ENCODE measurements at regions of chr16 and their contacts with region 1.

Region 1: GRCh38 chr16:50368410-50369132 is at the start of gene BRD7:
- DNase-seq: no peak
- H3K4me3 ChIP-seq: peak within 1 kb of the TSS; percentile 70
- H3K27ac ChIP-seq: no peak within 1 kb of the TSS
- H3K27me3 ChIP-seq: peaks cover 4% of the 10 kb centered on the region
- CTCF ChIP-seq: peak; percentile 30
- polyA plus RNA-seq, gene BRD7: 49.2 and 69.2 TPM in 2 replicates

Region 2: DNA sequence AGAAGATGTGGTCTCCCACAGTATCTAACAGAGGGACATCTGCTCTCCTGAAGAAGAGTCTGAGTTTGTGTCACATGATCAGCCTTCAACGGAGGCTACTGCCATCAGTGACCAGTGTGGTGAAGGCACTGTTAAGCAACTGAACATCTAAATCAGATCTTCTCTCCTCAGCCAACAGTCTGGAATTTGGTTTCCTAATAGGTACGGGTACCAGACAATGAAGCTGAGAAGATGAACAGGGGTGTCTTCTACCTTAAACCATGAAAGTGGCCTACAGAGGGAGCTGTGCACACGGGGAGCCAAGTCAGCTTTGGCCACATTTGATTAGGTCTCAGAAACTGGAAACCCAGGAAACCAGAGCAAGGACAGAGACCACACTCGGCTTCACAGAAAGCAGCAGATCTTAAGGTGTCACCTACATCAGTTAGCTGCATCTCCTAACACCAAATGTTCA is 41.6 kb before region 1 on chr16:
- CTCF ChIA-PET with region 1: interaction called, 10 read pairs
- POLR2A ChIA-PET with region 1: no interaction called
- DNase-seq: no peak
- H3K4me3 ChIP-seq: no peak overlapping the region
- H3K27ac ChIP-seq: no peak overlapping the region
- H3K27me3 ChIP-seq: no peaks in the 10 kb centered on the region
- CTCF ChIP-seq: peak; percentile 58

Region 3: DNA sequence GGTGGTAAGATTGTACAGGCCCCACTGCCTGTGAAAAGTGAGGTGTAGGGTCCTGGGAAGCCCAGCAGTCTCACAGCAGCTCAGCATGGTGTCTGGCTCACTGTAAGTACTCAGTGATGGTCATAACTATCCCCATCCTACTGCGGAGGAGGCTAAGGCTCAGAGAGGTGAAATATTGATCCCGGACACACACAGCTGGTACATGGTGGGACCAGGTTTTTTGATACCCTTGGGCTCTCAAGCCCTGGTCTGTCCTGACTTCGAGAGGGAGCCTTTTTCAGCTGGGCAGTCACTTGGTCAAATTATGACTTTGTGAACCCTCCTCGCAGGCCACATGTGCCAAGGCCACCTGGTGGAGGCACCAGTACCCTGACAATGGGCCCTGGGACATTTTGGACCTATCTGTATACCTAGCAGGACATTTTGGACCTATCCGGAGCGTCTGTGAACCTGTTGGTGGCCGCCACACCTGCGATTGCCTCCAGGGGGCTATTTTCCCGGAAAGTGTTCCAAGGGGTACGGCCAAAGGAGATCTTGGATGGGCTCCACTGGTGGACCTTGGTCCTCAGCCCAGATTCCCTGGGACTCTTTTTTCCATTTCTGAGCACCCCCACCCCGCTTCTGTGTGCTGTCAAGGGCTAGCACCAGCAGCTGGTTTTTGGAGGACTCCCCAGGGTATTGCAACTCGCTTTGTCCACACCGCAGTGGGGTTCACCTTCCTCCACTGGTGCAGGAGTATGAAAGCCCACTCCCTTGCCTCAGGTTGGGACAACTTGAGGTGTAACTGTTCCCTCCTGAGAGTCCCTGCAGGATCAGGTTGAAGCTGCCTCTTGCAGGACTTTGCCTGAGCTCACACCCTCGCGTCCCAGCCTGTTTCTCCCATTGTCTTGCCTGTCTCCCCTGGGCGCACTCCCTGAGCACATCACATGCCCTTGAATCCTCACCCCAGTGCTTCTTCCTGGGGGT is 96.0 kb after region 1 on chr16:
- CTCF ChIA-PET with region 1: no interaction called
- POLR2A ChIA-PET with region 1: no interaction called
- DNase-seq: no peak
- H3K4me3 ChIP-seq: no peak overlapping the region
- H3K27ac ChIP-seq: no peak overlapping the region
- H3K27me3 ChIP-seq: peaks cover 23% of the 10 kb centered on the region
- CTCF ChIP-seq: no peak

Region 4: GRCh38 chr16:50836121-50836621 is 467.6 kb after region 1 on chr16:
- CTCF ChIA-PET with region 1: interaction called, 11 read pairs
- POLR2A ChIA-PET with region 1: no interaction called
- DNase-seq: no peak
- H3K4me3 ChIP-seq: no peak overlapping the region
- H3K27ac ChIP-seq: no peak overlapping the region
- H3K27me3 ChIP-seq: peaks cover 12% of the 10 kb centered on the region
- CTCF ChIP-seq: no peak